ENCODE measurements at regions of chr5 and their contacts with region 1.

Region 1: DNA sequence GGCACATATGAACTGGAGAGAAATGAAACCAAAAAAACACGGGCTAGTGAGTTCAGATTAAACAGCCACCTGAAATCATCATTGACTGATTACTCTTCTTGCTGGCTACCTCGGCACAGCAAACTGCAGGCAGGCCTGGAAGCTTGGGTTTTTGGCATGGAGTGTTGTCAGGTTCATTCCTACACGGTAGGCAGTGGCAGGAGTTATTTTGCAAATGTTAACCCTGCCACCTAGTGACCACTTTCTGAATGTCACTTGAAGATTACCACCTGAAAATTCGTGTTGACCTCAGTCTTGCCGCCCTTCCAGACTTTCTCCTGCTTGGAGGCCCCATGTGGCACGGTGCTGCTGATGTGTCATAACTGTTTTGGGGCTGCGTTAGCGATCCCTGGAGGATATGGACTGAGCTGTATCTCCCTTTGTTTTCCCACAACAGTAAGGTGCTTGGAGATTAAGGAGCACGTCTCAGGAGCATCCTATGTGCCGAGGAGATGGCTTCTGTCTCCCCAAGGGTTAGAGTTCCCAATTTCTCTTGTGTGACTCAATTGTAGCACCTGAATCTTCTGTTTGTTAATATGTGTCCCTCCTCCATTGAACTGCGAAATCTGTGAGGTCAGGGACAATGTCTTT is 12.7 kb upstream of the CD180 start:
- DNase-seq: no peak

Region 2: GRCh38 chr5:66807743-66808142 is 401.5 kb before region 1 on chr5:
- intact Hi-C with region 1: loop called (anchors 10 kb)
- DNase-seq: no peak

Region 3: DNA sequence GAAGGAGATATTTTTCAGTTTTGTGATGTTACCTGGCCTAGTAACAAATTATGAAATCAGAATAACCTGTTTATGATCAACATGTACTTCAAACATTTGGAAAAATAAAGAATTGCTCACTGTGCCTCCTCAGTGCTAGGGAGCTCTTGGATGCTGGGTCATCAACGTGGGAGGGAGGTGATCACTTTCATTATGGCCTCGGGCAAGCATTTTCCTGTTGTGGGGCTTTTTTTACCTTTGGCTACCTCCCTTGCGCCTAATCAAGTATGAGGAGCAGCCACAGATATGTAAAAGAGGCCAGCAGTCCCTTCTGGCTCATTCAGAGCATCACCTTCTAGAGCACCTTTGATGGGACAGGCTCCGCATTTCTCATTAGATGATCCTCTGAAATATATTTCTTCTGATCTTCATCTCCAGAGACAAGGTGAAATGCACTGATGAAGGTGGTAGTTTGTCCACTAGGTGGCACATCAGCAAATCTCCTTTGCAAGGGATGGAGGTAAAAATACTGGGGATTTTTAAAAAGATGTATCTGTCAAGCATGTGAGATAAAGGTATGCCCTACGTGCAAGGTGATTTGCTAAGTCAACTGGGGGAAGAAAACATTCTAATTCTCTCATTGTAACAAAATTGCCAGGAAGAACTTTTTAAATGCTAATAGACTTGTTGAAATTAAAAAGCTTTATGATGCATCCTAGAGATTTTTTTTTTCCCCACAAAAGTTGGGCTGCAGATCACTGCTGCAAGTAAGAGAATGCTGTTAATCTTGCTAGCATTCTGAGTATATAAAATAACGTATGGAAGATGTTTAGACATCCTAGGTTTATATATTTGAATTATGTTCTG is 394.9 kb before region 1 on chr5:
- intact Hi-C with region 1: loop called (anchors 10 kb)
- DNase-seq: no peak

Region 4: GRCh38 chr5:67381236-67381880 is 172.1 kb after region 1 on chr5:
- intact Hi-C with region 1: no loop called
- DNase-seq: no peak

Region 5: GRCh38 chr5:68315679-68316271 is 1106.5 kb after region 1 on chr5:
- intact Hi-C with region 1: no loop called
- DNase-seq: no peak

Region 6: GRCh38 chr5:68331192-68332079 is 1122.2 kb after region 1 on chr5:
- intact Hi-C with region 1: no loop called
- DNase-seq: no peak

Measured in posterior vena cava (tissue), 2 donors.